CD8-positive, alpha-beta T cell (primary cell): ENCODE measurements at regions of chr17 and their contacts with region 1.

Region 1: DNA sequence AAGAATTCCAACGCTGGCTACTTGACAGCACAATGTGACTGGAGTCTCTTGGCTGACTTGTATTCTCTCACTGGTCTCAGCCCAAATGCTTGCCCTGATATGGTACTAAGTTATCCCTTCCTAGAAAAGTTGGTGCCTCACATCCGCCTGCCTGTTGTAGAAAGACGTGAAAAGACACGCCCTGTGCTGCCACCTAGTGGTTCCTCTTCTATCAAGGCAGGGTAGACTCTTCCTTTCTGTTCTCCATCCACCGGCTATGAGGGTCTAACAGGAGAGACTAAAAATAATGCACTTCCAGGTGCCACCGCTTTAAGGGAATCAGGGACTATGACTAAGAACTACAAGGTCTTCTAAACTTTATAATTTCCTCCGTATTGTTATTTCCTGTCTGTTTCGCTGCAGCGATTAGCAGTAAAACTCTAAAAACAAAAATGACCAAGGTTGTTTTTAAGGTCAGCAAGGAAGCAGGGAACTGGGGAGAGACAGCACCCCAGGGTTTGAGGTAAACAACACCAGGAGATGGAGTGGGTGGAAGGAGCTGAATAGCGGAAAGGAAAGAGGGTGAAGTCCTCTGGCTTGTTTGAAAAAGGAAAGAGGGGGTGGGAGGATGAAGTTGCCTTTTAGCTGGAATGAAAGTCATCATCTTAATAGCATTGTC is 109.5 kb downstream of the YPEL2 start:
- DNase-seq: peak; percentile 66 to 91 (median 88)
- ATAC-seq: peak; percentile 97
- H3K4me3 ChIP-seq: no peak overlapping the region
- H3K4me3 Mint-ChIP-seq: no peak overlapping the region
- H3K27ac ChIP-seq: no peak overlapping the region
- H3K27ac Mint-ChIP-seq: no peak overlapping the region
- H3K4me1 ChIP-seq: peaks cover 19% of the 10 kb centered on the region
- H3K4me1 Mint-ChIP-seq: peaks cover 17% of the 10 kb centered on the region
- H3K27me3 ChIP-seq: no peaks in the 10 kb centered on the region
- H3K27me3 Mint-ChIP-seq: no peaks in the 10 kb centered on the region
- CTCF ChIP-seq: peak; percentile 76

Region 2: DNA sequence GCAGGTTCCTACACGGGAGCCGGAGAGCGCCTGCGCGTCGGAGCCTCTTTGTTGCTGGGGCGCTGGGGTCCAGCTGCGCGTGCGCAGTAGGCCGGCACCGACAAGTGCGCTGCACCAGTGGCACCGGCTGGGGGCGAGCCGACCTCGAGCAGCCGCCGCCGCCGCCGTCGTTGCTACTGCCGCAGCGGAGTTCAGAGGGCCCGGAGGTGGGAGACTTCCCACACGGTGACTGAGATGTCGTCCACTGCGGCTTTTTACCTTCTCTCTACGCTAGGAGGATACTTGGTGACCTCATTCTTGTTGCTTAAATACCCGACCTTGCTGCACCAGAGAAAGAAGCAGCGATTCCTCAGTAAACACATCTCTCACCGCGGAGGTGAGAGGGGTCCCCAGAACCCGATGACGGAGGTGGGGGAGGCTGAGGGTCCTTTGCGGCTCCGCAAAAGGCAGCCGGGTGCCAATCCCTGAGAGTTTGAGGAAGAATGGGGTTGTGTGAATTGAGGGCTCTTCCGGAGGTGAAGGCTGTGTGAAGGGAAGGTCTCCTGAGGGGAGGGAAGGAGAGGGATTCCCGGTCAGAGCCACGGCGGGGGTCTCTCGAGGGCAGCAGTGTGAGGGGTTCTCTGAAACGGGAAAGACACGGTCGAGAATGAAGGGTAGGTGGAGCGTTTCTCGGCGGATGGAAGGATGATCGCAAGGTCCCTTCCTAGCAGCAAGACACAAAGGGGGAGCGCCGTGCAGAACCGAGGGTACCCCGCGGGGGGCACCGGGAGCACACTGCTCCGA is 220.3 kb before region 1 on chr17 and contains the start of gene GDPD1:
- CTCF ChIA-PET with region 1: no interaction called
- POLR2A ChIA-PET with region 1: no interaction called
- intact Hi-C with region 1: loop called (anchors 1 to 2 kb)
- DNase-seq: peak; percentile 94 to 99 (median 97)
- ATAC-seq: peak; percentile 96
- H3K4me3 ChIP-seq: peak within 1 kb of the TSS; percentile 97 to 100
- H3K4me3 Mint-ChIP-seq: peak within 1 kb of the TSS; percentile 98
- H3K27ac ChIP-seq: peak within 1 kb of the TSS; percentile 91 to 92
- H3K27ac Mint-ChIP-seq: peak within 1 kb of the TSS; percentile 99
- H3K4me1 ChIP-seq: peaks cover 4% of the 10 kb centered on the region
- H3K4me1 Mint-ChIP-seq: peaks cover 13% of the 10 kb centered on the region
- H3K27me3 ChIP-seq: no peaks in the 10 kb centered on the region
- H3K27me3 Mint-ChIP-seq: no peaks in the 10 kb centered on the region
- CTCF ChIP-seq: peak; percentile 71
- total RNA-seq, gene GDPD1: 1.1 to 1.8 TPM

Region 3: DNA sequence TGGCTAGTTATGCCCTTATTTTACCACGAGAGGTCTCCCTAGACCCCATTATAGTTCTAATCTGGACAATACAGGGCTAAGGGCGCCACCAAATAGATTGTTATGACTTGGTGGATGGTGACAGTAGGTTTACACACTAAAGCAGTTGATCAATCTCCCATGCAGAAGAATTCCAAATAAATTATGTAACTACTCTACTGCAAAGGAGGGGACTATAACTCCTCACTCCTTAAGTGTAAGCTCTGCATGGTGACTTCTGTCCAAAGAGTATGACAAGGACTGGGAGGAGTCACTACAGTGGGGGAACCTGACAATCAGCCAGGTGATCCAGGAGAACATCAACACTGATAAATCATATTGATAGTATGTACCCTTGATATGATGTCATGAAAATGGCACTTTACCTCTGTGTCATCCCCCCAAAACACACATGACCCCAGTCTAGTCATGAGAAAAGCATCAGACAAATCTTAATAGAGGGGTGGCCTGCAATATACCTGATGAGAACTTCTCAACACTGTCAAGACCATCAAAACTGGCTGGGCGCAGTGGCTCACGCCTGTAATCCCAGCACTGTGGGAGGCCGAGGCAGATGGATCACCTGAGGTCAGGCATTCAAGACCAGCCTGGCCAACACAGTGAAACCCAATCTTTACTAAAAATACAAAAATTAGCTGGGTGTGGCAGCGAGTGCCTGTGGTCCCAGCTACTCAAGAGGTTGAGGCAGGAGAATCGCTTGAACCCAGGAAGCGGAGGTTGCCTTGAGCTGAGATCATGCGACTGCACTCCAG is 129.6 kb before region 1 on chr17:
- CTCF ChIA-PET with region 1: interaction called, 319 read pairs
- POLR2A ChIA-PET with region 1: interaction called, 3 read pairs
- intact Hi-C with region 1: loop called (anchors 1 kb)
- DNase-seq: peak in 6 of 9 experiments; percentile 16 to 77 (median 42)
- ATAC-seq: peak; percentile 99
- H3K4me3 ChIP-seq: no peak overlapping the region
- H3K4me3 Mint-ChIP-seq: no peak overlapping the region
- H3K27ac ChIP-seq: no peak overlapping the region
- H3K27ac Mint-ChIP-seq: no peak overlapping the region
- H3K4me1 ChIP-seq: no peaks in the 10 kb centered on the region
- H3K4me1 Mint-ChIP-seq: no peaks in the 10 kb centered on the region
- H3K27me3 ChIP-seq: no peaks in the 10 kb centered on the region
- H3K27me3 Mint-ChIP-seq: no peaks in the 10 kb centered on the region
- CTCF ChIP-seq: peak; percentile 76

Region 4: DNA sequence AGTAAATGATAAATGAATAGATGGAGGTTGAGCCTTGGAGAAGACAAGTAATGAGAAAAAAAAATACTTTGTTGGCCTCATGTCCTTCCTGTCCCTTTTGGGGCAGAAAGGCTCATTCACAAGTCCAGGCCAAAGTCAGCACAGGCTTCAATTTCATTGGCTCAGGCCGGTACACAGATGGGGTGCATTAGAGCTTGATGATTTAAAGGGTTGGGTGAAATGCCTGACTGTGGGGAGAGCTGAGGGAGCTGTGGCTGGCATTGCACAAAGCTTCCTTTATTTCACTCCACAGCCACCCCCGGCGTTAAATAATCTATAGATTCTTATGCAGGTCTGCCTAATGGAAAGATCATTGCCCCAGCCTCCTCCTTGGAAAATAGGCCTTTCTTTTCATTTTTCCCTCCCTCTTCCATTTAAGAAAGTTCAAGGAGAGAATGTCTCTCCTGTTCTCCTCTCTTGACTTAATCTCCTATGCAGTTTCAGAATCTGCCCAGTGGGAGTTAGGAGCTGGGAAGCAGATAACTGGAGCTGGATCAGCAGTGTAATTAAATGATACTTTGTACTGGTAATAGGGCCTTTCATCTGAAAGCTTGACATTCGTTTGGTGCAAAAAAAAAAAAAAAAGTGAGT is 85.1 kb before region 1 on chr17:
- CTCF ChIA-PET with region 1: interaction called, 11 read pairs
- POLR2A ChIA-PET with region 1: interaction called, 4 read pairs
- intact Hi-C with region 1: no loop called
- DNase-seq: no peak
- ATAC-seq: no peak
- H3K4me3 ChIP-seq: no peak overlapping the region
- H3K4me3 Mint-ChIP-seq: no peak overlapping the region
- H3K27ac ChIP-seq: no peak overlapping the region
- H3K27ac Mint-ChIP-seq: peak overlapping the region; percentile 83
- H3K4me1 ChIP-seq: peaks cover 59% of the 10 kb centered on the region
- H3K4me1 Mint-ChIP-seq: peaks cover 84% of the 10 kb centered on the region
- H3K27me3 ChIP-seq: no peaks in the 10 kb centered on the region
- H3K27me3 Mint-ChIP-seq: no peaks in the 10 kb centered on the region
- CTCF ChIP-seq: no peak

Region 5: DNA sequence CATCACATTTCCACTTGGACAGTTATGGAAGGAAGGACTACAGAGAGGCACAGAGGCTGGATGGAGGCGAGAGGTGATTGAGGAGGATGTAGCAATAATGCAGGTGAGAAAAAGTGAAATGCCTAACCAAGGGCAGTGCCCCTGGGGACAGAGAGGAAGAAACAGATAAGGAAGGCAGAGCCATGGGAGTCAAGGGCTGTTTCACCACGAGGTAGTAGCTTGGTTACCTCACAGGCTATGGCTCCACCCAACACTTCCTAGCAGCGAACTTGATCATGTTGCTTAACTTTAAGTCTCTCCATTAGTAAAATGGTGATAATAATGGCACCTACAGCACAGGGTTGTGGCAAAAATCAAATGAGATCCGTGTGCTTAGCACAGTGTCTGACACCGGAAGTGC is 25.5 kb before region 1 on chr17:
- CTCF ChIA-PET with region 1: interaction called, 10 read pairs
- POLR2A ChIA-PET with region 1: no interaction called
- intact Hi-C with region 1: no loop called
- DNase-seq: no peak
- ATAC-seq: no peak
- H3K4me3 ChIP-seq: no peak overlapping the region
- H3K4me3 Mint-ChIP-seq: no peak overlapping the region
- H3K27ac ChIP-seq: no peak overlapping the region
- H3K27ac Mint-ChIP-seq: no peak overlapping the region
- H3K4me1 ChIP-seq: peaks cover 17% of the 10 kb centered on the region
- H3K4me1 Mint-ChIP-seq: peaks cover 35% of the 10 kb centered on the region
- H3K27me3 ChIP-seq: no peaks in the 10 kb centered on the region
- H3K27me3 Mint-ChIP-seq: no peaks in the 10 kb centered on the region
- CTCF ChIP-seq: no peak

Region 6: GRCh38 chr17:59427425-59427921 is 13.4 kb before region 1 on chr17:
- CTCF ChIA-PET with region 1: interaction called, 39 read pairs
- POLR2A ChIA-PET with region 1: interaction called, 3 read pairs
- intact Hi-C with region 1: no loop called
- DNase-seq: peak in 4 of 9 experiments; percentile 6 to 40 (median 22)
- ATAC-seq: no peak
- H3K4me3 ChIP-seq: no peak overlapping the region
- H3K4me3 Mint-ChIP-seq: no peak overlapping the region
- H3K27ac ChIP-seq: no peak overlapping the region
- H3K27ac Mint-ChIP-seq: no peak overlapping the region
- H3K4me1 ChIP-seq: peaks cover 6% of the 10 kb centered on the region
- H3K4me1 Mint-ChIP-seq: peaks cover 9% of the 10 kb centered on the region
- H3K27me3 ChIP-seq: no peaks in the 10 kb centered on the region
- H3K27me3 Mint-ChIP-seq: no peaks in the 10 kb centered on the region
- CTCF ChIP-seq: no peak

Region 7: DNA sequence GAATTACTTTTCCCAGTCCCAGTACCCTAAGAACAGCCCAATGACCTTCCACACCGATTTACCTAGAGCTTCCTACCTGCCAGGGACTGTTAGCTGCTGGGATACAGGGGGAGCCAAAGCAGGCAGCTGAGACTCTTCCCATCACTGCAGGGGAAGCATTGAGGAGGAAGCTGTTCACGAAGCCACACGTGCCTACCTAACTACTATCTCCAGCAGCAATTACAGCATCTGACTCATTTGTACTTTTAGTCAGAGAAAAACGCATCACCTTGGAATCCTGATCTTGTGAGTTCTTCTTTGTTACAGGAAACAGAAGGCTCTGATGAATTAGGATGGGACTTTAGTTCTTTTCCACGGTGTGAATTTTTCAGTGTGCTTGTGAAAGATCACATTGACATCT is 10.8 kb after region 1 on chr17:
- CTCF ChIA-PET with region 1: interaction called, 20 read pairs
- POLR2A ChIA-PET with region 1: no interaction called
- intact Hi-C with region 1: no loop called
- DNase-seq: no peak
- ATAC-seq: no peak
- H3K4me3 ChIP-seq: no peak overlapping the region
- H3K4me3 Mint-ChIP-seq: no peak overlapping the region
- H3K27ac ChIP-seq: no peak overlapping the region
- H3K27ac Mint-ChIP-seq: no peak overlapping the region
- H3K4me1 ChIP-seq: no peaks in the 10 kb centered on the region
- H3K4me1 Mint-ChIP-seq: no peaks in the 10 kb centered on the region
- H3K27me3 ChIP-seq: peaks cover 0 to 2% of the 10 kb centered on the region in 2 experiments
- H3K27me3 Mint-ChIP-seq: no peaks in the 10 kb centered on the region
- CTCF ChIP-seq: no peak